Heart right ventricle (tissue), 16 donors: ENCODE measurements at regions of chr2 and their contacts with region 1.

Region 1: GRCh38 chr2:207473049-207473930 is 56.5 kb upstream of the CREB1 start:
- DNase-seq: peak in 1 of 2 donors; percentile 62
- ATAC-seq: peak; percentile 68 to 89 (median 87)
- H3K4me3 ChIP-seq: peak overlapping the region in 3 of 10 donors; percentile 9 to 34 (median 18)
- H3K27ac ChIP-seq: peak overlapping the region in 5 of 10 donors; percentile 32 to 52 (median 42)
- H3K4me1 ChIP-seq: peaks cover 0 to 30% (median 23%) of the 10 kb centered on the region in 9 donors
- H3K27me3 ChIP-seq: no peaks in the 10 kb centered on the region
- CTCF ChIP-seq: peak; percentile 49 to 87 (median 67)

Region 2: GRCh38 chr2:206800506-206801417 is 672.5 kb before region 1 on chr2:
- intact Hi-C with region 1: loop called (anchors 1 to 5 kb)
- DNase-seq: peak; percentile 21 to 75
- ATAC-seq: peak; percentile 51 to 86 (median 82)
- H3K4me3 ChIP-seq: peak overlapping the region in 4 of 10 donors; percentile 6 to 22 (median 17)
- H3K27ac ChIP-seq: no peak overlapping the region
- H3K4me1 ChIP-seq: peaks cover 0 to 32% (median 12%) of the 10 kb centered on the region in 9 donors
- H3K27me3 ChIP-seq: no peaks in the 10 kb centered on the region
- CTCF ChIP-seq: peak; percentile 50 to 82 (median 75)

Region 3: DNA sequence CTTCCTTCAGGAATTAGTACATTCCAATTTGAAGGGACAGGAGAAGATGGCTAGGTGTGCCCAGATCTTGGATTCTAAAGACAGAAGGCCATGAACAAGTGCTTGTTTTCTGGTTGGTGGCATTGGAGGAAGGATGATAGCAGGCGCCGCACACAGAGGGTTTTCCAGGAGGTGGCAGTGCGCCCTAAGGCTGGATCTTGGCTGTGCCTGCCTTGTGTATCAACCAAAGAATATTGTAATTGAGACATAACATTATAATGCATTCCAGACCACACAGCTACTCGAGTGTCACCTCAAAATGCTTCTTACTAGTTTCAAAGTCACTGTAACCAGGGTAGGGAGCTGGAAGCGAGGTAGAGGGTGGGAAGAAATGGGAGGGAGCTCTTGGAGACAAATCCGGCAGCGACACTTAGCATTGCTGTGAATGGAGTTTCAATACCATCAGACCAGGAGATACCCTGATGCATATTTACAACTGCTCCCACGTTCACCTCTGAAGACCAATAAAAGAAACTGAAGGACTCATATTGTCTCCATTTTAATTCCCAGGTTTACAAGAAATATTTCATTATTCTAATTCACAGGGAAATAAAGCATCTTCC is 491.4 kb before region 1 on chr2:
- intact Hi-C with region 1: loop called (anchors 1 to 5 kb)
- DNase-seq: peak; percentile 76 to 79
- ATAC-seq: peak; percentile 88 to 97 (median 94)
- H3K4me3 ChIP-seq: no peak overlapping the region
- H3K27ac ChIP-seq: peak overlapping the region in 1 of 10 donors; percentile 10
- H3K4me1 ChIP-seq: peaks cover 3 to 35% (median 22%) of the 10 kb centered on the region in 9 donors
- H3K27me3 ChIP-seq: no peaks in the 10 kb centered on the region
- CTCF ChIP-seq: peak; percentile 82 to 94 (median 87)

Region 4: DNA sequence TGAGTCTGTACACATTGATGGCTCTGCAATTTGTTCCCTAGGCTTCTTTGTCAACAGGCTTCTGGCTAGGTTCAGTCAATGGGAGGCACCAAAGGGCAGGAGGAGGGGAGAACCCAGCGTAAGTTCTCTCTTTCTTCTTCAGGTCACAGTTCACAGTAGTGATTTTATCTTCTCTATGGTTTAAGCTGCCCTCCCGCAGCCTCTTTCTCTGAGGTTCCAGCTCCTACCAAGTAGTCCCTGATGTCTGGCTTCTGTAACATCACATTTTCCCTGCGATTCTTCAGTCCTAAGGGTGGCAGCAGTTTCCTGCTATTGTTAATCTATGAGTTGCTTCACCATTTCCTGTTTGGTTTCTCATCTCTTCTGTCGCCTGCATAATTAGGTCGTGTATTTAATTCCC is 426.6 kb before region 1 on chr2:
- intact Hi-C with region 1: loop called in 9 of 10 experiments (anchors 2 to 10 kb)
- DNase-seq: no peak
- ATAC-seq: peak; percentile 30 to 85 (median 68)
- H3K4me3 ChIP-seq: no peak overlapping the region
- H3K27ac ChIP-seq: peak overlapping the region in 1 of 10 donors; percentile 64
- H3K4me1 ChIP-seq: peaks cover 0 to 18% (median 8%) of the 10 kb centered on the region in 9 donors
- H3K27me3 ChIP-seq: no peaks in the 10 kb centered on the region
- CTCF ChIP-seq: peak in 7 of 9 donors; percentile 20 to 56 (median 39)

Region 5: GRCh38 chr2:207223051-207223450 is 250.2 kb before region 1 on chr2:
- intact Hi-C with region 1: loop called in 1 of 10 experiments (anchors 10 kb)
- DNase-seq: no peak
- ATAC-seq: no peak
- H3K4me3 ChIP-seq: no peak overlapping the region
- H3K27ac ChIP-seq: no peak overlapping the region
- H3K4me1 ChIP-seq: peaks cover 0 to 41% (median 38%) of the 10 kb centered on the region in 9 donors
- H3K27me3 ChIP-seq: no peaks in the 10 kb centered on the region
- CTCF ChIP-seq: no peak

Region 6: DNA sequence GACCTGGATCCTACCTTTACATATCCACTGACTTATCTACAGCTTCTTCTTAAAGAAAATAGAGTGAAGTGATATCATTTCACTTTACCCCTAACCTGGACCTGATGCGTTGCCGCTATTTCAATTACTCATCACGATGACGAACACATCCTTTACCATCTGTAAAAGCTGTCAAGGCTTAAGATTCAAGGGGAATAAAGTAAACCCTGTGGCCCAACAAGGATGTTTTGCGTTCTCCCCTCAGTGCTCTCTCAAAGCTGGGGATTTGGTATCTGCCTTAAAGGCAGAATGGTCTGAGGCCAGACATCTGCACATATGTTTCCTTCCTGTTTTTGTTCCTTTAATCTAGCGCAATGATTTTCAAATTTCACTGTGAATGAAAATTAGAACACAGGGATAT is 207.4 kb before region 1 on chr2:
- intact Hi-C with region 1: loop called in 1 of 10 experiments (anchors 5 kb)
- DNase-seq: no peak
- ATAC-seq: peak in 1 of 8 donors; percentile 52
- H3K4me3 ChIP-seq: no peak overlapping the region
- H3K27ac ChIP-seq: no peak overlapping the region
- H3K4me1 ChIP-seq: peaks cover 0 to 23% (median 13%) of the 10 kb centered on the region in 9 donors
- H3K27me3 ChIP-seq: no peaks in the 10 kb centered on the region
- CTCF ChIP-seq: no peak

Region 7: DNA sequence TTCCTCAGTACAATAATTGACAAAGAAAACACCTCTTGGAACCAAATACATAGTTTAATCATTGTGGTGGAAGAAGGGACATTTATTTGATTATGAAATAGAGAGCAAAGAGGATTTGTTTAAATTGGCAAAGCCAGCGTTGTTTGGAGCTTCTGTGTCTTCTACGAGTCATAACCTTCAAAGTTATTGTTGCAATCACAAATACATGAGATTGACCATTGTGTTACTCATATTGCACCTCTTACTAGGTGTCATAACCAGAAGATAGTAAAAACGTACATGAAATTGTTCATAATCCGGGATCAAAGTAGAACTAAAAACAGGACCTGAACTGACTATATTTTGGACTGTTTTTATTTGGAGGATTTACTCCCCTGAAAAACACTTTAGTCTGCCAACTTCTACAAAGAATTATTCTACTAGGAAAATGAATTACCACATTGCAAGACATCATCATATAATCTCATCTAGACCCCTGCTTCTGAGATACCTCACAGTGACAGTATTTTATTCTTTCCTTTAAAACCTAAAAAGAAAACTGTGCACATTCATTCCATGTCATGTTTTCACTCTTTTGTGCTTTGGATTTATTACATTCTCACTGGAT is 155.8 kb before region 1 on chr2:
- intact Hi-C with region 1: no loop called
- DNase-seq: no peak
- ATAC-seq: no peak
- H3K4me3 ChIP-seq: no peak overlapping the region
- H3K27ac ChIP-seq: no peak overlapping the region
- H3K4me1 ChIP-seq: no peaks in the 10 kb centered on the region
- H3K27me3 ChIP-seq: no peaks in the 10 kb centered on the region
- CTCF ChIP-seq: no peak

Region 8: GRCh38 chr2:207529330-207530159 is 56.3 kb after region 1 on chr2 and contains the start of gene CREB1:
- intact Hi-C with region 1: loop called in 1 of 10 experiments (anchors 2 kb)
- DNase-seq: peak; percentile 98 to 100
- ATAC-seq: peak; percentile 96 to 98 (median 96)
- H3K4me3 ChIP-seq: peak within 1 kb of the TSS; percentile 68 to 98 (median 83)
- H3K27ac ChIP-seq: peak within 1 kb of the TSS; percentile 96 to 100 (median 98)
- H3K4me1 ChIP-seq: peaks cover 7 to 61% (median 49%) of the 10 kb centered on the region in 9 donors
- H3K27me3 ChIP-seq: no peaks in the 10 kb centered on the region
- CTCF ChIP-seq: peak in 3 of 9 donors; percentile 23 to 36 (median 35)
- total RNA-seq, gene CREB1: 36.8 to 62.2 (median 45.7) TPM